Activated CD8-positive, alpha-beta T cell treated with anti-CD3 and anti-CD28 coated beads, Interleukin-2, amount 10 ng/mL, durations not matched to agents 7 days and 5 days (primary cell): ENCODE measurements at regions of chr6 and their contacts with region 1.

Region 1: GRCh38 chr6:13873285-13874190 is 51.2 kb upstream of the RNF182 start:
- DNase-seq: peak; percentile 79
- ATAC-seq: peak; percentile 98
- H3K4me3 Mint-ChIP-seq: peak overlapping the region; percentile 63
- H3K27ac Mint-ChIP-seq: peak overlapping the region; percentile 10
- H3K4me1 Mint-ChIP-seq: peaks cover 10% of the 10 kb centered on the region
- H3K27me3 Mint-ChIP-seq: peaks cover 8% of the 10 kb centered on the region

Region 2: GRCh38 chr6:13885601-13886000 is 12.1 kb after region 1 on chr6:
- CTCF ChIA-PET with region 1: interaction called, 16 read pairs
- POLR2A ChIA-PET with region 1: no interaction called
- DNase-seq: no peak
- ATAC-seq: no peak
- H3K4me3 Mint-ChIP-seq: no peak overlapping the region
- H3K27ac Mint-ChIP-seq: no peak overlapping the region
- H3K4me1 Mint-ChIP-seq: no peaks in the 10 kb centered on the region
- H3K27me3 Mint-ChIP-seq: no peaks in the 10 kb centered on the region